ENCODE measurements at regions of chr12 and their contacts with region 1.

Region 1: DNA sequence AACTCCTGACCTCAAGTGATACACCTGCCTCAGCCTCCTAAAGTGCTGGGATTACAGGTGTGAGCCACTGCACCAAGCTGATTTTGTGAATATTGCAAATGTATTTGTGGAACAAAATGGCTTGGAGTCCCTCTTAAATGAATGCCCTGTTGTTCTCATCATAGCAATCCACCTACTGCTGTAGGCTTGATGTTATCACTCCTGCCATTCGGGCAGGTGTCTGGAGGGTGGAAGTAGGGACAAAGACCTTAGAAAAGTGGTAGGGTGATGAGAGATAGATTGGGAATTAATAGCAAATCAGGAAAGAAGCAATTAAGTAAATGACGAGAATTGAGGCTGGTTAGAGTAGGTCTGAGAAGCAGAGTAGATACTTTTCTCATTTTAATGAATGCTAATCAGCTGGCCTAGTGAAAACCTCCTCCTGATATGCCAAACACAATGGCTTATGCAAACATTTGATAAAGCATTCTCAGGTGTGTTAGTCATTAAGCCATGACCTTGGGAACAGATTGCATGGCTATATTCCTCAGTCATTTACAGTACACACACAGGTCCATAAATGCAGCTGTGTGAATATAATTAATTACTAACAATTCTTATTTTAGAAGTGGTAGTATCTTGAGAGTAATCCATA is 60.5 kb upstream of the USP44 start:
- DNase-seq: no peak
- H3K4me3 ChIP-seq: no peak overlapping the region
- H3K27ac ChIP-seq: no peak overlapping the region
- H3K4me1 ChIP-seq: peaks cover 15% of the 10 kb centered on the region
- H3K27me3 ChIP-seq: no peaks in the 10 kb centered on the region
- CTCF ChIP-seq: no peak

Region 2: DNA sequence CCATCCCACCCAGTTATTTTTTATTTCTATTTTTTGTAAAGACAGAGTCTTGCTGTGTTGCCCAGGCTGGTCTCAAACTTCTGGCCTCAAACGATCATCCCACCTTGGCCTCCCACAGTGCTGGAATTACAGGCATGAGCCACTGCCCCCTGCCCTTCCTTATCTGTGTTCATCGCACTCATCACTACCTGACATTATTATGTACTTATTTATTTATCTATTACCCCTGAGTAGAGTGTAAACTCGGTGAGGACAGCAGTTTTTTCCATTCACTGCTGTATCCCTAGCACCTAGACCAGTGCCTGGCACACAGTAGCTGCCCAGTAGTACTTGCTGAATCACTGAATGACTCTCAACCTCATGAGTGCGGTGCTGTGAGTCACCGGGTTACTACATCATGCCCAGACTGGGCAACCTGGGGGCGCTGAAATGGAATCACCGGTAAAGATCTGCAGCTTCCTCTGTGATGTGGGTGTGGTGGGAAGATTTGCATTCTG is 21.3 kb after region 1 on chr12:
- CTCF ChIA-PET with region 1: interaction called, 3 read pairs
- dilution Hi-C with region 1: no loop called
- in situ Hi-C with region 1: no loop called
- intact Hi-C with region 1: loop called (anchors 1 kb)
- DNase-seq: peak; percentile 99
- H3K4me3 ChIP-seq: no peak overlapping the region
- H3K27ac ChIP-seq: peak overlapping the region; percentile 94
- H3K4me1 ChIP-seq: peaks cover 22% of the 10 kb centered on the region
- H3K27me3 ChIP-seq: no peaks in the 10 kb centered on the region
- CTCF ChIP-seq: peak in 1 of 2 donors; percentile 12

Measured in mammary epithelial cell (primary cell).